WTC11 (cell line): ENCODE measurements at regions of chr21 and their contacts with region 1.

Region 1: GRCh38 chr21:36966066-36966820 is at the start of gene HLCS:
- DNase-seq: peak; percentile 73
- ATAC-seq: peak; percentile 90
- H3K4me3 Mint-ChIP-seq: peak within 1 kb of the TSS; percentile 75
- H3K27ac Mint-ChIP-seq: peak within 1 kb of the TSS; percentile 74
- H3K4me1 Mint-ChIP-seq: peaks cover 13% of the 10 kb centered on the region
- H3K27me3 Mint-ChIP-seq: no peaks in the 10 kb centered on the region
- CTCF ChIP-seq: no peak
- total RNA-seq, gene HLCS: 9.3 to 11.1 TPM (median 10.9 TPM) in 3 replicates

Region 2: GRCh38 chr21:36945496-36946138 is 20.6 kb before region 1 on chr21:
- CTCF ChIA-PET with region 1: interaction called, 13 read pairs
- POLR2A ChIA-PET with region 1: interaction called, 5 read pairs
- DNase-seq: no peak
- ATAC-seq: no peak
- H3K4me3 Mint-ChIP-seq: no peak overlapping the region
- H3K27ac Mint-ChIP-seq: no peak overlapping the region
- H3K4me1 Mint-ChIP-seq: peaks cover 23% of the 10 kb centered on the region
- H3K27me3 Mint-ChIP-seq: peaks cover 9% of the 10 kb centered on the region
- CTCF ChIP-seq: no peak

Region 3: GRCh38 chr21:36989699-36990507 is 23.7 kb after region 1 on chr21:
- CTCF ChIA-PET with region 1: interaction called, 16 read pairs
- POLR2A ChIA-PET with region 1: no interaction called
- DNase-seq: peak; percentile 92
- ATAC-seq: peak; percentile 87
- H3K4me3 Mint-ChIP-seq: peak overlapping the region; percentile 76
- H3K27ac Mint-ChIP-seq: peak overlapping the region; percentile 94
- H3K4me1 Mint-ChIP-seq: peaks cover 30% of the 10 kb centered on the region
- H3K27me3 Mint-ChIP-seq: peaks cover 18% of the 10 kb centered on the region
- CTCF ChIP-seq: peak; percentile 78